B cell (primary cell): ENCODE measurements at regions of chr10 and their contacts with region 1.

Region 1: GRCh38 chr10:46030091-46030937 is at the start of gene NCOA4:
- DNase-seq: peak; percentile 97
- ATAC-seq: peak; percentile 98
- H3K4me3 ChIP-seq: peak within 1 kb of the TSS; percentile 57 to 97 (median 96)
- H3K4me3 Mint-ChIP-seq: peak within 1 kb of the TSS; percentile 95
- H3K27ac ChIP-seq: peak within 1 kb of the TSS; percentile 80 to 97
- H3K27ac Mint-ChIP-seq: peak within 1 kb of the TSS; percentile 91
- H3K4me1 ChIP-seq: peaks cover 26 to 38% of the 10 kb centered on the region in 2 donors
- H3K4me1 Mint-ChIP-seq: peaks cover 44% of the 10 kb centered on the region
- H3K27me3 ChIP-seq: no peaks in the 10 kb centered on the region
- H3K27me3 Mint-ChIP-seq: peaks cover 4% of the 10 kb centered on the region
- CTCF ChIP-seq: peak; percentile 78
- total RNA-seq, gene NCOA4: 69.7 and 71.2 TPM in 2 replicates

Region 2: GRCh38 chr10:45198596-45199379 is 831.5 kb before region 1 on chr10:
- CTCF ChIA-PET with region 1: no interaction called
- POLR2A ChIA-PET with region 1: no interaction called
- intact Hi-C with region 1: no loop called
- DNase-seq: no peak
- ATAC-seq: no peak
- H3K4me3 ChIP-seq: no peak overlapping the region
- H3K4me3 Mint-ChIP-seq: no peak overlapping the region
- H3K27ac ChIP-seq: no peak overlapping the region
- H3K27ac Mint-ChIP-seq: no peak overlapping the region
- H3K4me1 ChIP-seq: no peaks in the 10 kb centered on the region
- H3K4me1 Mint-ChIP-seq: no peaks in the 10 kb centered on the region
- H3K27me3 ChIP-seq: no peaks in the 10 kb centered on the region
- H3K27me3 Mint-ChIP-seq: peaks cover under 1% of the 10 kb centered on the region
- CTCF ChIP-seq: no peak

Region 3: DNA sequence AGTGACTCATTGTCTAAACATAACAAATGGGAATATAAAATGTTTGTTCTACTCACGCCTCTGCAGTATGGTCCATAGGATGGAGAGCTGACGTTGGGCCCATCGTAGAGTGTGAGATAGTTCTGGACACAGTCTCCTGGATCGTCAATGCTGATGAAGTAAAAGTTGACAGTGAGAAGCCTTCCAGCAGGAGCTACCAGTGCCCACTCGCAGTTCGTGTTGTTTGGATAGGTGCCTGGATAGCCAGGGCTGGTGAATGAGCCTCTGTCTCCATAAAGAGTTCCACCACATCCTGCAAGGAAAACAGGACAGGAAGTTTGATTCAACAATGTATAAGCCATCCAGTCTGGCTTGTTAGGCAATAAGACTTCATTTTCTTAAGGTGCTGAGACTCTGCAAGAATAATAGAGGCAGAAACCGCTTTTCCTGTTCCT is 794.5 kb before region 1 on chr10:
- CTCF ChIA-PET with region 1: interaction called, 12 read pairs
- POLR2A ChIA-PET with region 1: no interaction called
- intact Hi-C with region 1: loop called (anchors 1 kb)
- DNase-seq: peak; percentile 2
- ATAC-seq: no peak
- H3K4me3 ChIP-seq: no peak overlapping the region
- H3K4me3 Mint-ChIP-seq: no peak overlapping the region
- H3K27ac ChIP-seq: no peak overlapping the region
- H3K27ac Mint-ChIP-seq: no peak overlapping the region
- H3K4me1 ChIP-seq: no peaks in the 10 kb centered on the region
- H3K4me1 Mint-ChIP-seq: no peaks in the 10 kb centered on the region
- H3K27me3 ChIP-seq: no peaks in the 10 kb centered on the region
- H3K27me3 Mint-ChIP-seq: peaks cover 8% of the 10 kb centered on the region
- CTCF ChIP-seq: no peak

Region 4: DNA sequence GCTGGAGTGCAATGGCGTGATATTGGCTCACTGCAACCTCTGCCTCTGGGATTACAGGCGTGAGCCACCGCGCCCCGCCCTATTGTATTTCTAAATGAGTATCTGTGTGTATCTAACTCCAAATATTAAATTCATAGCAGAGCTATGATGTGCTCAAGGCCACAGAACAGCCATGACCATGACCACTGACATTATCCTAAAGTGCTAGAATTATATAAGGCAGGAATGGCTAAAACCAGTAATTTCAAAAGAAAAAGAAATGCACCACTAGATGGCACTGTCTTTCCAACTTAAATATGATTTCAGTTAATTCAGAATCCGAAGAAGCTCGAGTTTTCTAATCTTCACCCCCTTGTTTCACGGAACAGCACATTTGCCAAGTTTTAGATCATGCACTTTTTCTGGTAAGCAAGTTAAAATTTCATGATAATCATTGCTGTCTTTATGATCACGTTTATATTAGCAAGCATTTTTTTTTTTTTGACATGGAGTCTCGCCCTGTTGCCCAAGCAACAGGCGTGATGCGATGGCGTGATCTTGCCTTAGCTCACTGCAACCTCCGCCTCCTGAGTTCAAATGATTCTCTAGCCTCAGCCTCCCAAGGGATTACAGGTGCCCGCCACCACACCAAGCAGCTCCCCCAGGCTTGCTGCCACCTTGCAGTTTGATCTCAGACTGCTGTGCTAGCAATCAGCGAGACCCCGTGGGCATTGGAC is 780.2 kb before region 1 on chr10:
- CTCF ChIA-PET with region 1: interaction called, 4 read pairs
- POLR2A ChIA-PET with region 1: interaction called, 3 read pairs
- intact Hi-C with region 1: loop called (anchors 1 kb)
- DNase-seq: peak; percentile 82
- ATAC-seq: peak; percentile 90
- H3K4me3 ChIP-seq: peak overlapping the region in 4 of 5 experiments; percentile 1 to 56 (median 44)
- H3K4me3 Mint-ChIP-seq: peak overlapping the region; percentile 86
- H3K27ac ChIP-seq: peak overlapping the region; percentile 0 to 60
- H3K27ac Mint-ChIP-seq: peak overlapping the region; percentile 82
- H3K4me1 ChIP-seq: peaks cover 15 to 18% of the 10 kb centered on the region in 2 donors
- H3K4me1 Mint-ChIP-seq: peaks cover 26% of the 10 kb centered on the region
- H3K27me3 ChIP-seq: no peaks in the 10 kb centered on the region
- H3K27me3 Mint-ChIP-seq: peaks cover 7% of the 10 kb centered on the region
- CTCF ChIP-seq: peak; percentile 83

Region 5: DNA sequence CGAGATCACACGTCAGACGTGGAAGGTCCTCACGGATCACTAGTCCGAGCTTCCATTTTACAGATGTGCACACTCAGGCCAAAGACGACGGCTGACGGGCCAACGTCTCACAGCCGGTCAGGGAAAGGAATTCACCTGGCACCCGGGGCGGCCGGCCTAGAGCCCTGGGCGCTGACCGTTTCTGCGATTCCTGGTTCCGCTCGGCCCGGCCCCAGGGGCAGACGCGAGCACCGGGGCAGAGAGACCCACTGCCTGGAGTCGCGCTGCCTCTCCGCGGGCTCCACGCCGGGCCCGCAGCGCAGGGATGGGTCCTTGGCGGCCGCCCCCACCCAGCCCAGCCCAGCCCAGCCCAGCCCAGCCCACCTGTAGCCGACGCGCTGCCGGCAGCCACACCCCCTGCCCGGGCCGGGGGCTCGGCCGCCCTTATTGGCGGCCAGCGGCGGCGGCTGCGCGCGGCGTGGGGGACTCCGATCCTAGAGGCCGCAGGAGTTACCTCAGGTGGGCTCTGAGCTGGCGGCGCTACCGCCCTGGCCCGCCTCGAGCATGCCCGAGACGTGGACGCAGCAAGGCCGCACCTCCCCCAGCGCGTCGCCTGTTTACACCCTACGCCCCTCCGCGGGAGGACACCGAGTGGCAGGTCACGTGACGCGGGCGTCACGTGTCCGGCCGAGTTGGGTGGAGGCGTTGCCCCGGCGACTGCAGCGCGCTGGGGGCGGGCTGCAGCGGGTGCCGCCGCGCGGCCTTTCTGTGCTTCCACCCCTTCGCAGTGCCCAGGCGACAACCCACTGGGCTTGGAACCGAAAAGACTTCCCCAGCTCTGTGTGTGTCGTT is 435.8 kb before region 1 on chr10:
- CTCF ChIA-PET with region 1: no interaction called
- POLR2A ChIA-PET with region 1: no interaction called
- intact Hi-C with region 1: loop called (anchors 1 kb)
- DNase-seq: peak; percentile 95
- ATAC-seq: peak; percentile 88
- H3K4me3 ChIP-seq: peak overlapping the region; percentile 72 to 86 (median 83)
- H3K4me3 Mint-ChIP-seq: peak overlapping the region; percentile 96
- H3K27ac ChIP-seq: peak overlapping the region; percentile 87 to 88
- H3K27ac Mint-ChIP-seq: peak overlapping the region; percentile 98
- H3K4me1 ChIP-seq: peaks cover 26% of the 10 kb centered on the region in 2 donors
- H3K4me1 Mint-ChIP-seq: peaks cover 38% of the 10 kb centered on the region
- H3K27me3 ChIP-seq: no peaks in the 10 kb centered on the region
- H3K27me3 Mint-ChIP-seq: peaks cover 6% of the 10 kb centered on the region
- CTCF ChIP-seq: no peak

Region 6: GRCh38 chr10:46092524-46093081 is 62.3 kb after region 1 on chr10:
- CTCF ChIA-PET with region 1: interaction called, 6 read pairs
- POLR2A ChIA-PET with region 1: no interaction called
- intact Hi-C with region 1: loop called (anchors 5 kb)
- DNase-seq: peak; percentile 62
- ATAC-seq: peak; percentile 65
- H3K4me3 ChIP-seq: peak overlapping the region in 2 of 5 experiments; percentile 9 to 32
- H3K4me3 Mint-ChIP-seq: no peak overlapping the region
- H3K27ac ChIP-seq: peak overlapping the region in 1 of 2 donors; percentile 15
- H3K27ac Mint-ChIP-seq: no peak overlapping the region
- H3K4me1 ChIP-seq: peaks cover 60 to 72% of the 10 kb centered on the region in 2 donors
- H3K4me1 Mint-ChIP-seq: peaks cover 21% of the 10 kb centered on the region
- H3K27me3 ChIP-seq: no peaks in the 10 kb centered on the region
- H3K27me3 Mint-ChIP-seq: no peaks in the 10 kb centered on the region
- CTCF ChIP-seq: no peak

Region 7: GRCh38 chr10:46106410-46107255 is 76.3 kb after region 1 on chr10:
- CTCF ChIA-PET with region 1: no interaction called
- POLR2A ChIA-PET with region 1: no interaction called
- intact Hi-C with region 1: loop called (anchors 5 kb)
- DNase-seq: peak; percentile 69
- ATAC-seq: peak; percentile 90
- H3K4me3 ChIP-seq: peak overlapping the region; percentile 35 to 72 (median 61)
- H3K4me3 Mint-ChIP-seq: peak overlapping the region; percentile 83
- H3K27ac ChIP-seq: no peak overlapping the region
- H3K27ac Mint-ChIP-seq: no peak overlapping the region
- H3K4me1 ChIP-seq: peaks cover 8 to 11% of the 10 kb centered on the region in 2 donors
- H3K4me1 Mint-ChIP-seq: peaks cover 12% of the 10 kb centered on the region
- H3K27me3 ChIP-seq: peaks cover 0 to 13% (median 6%) of the 10 kb centered on the region in 4 experiments
- H3K27me3 Mint-ChIP-seq: peaks cover 11% of the 10 kb centered on the region
- CTCF ChIP-seq: peak; percentile 8